ENCODE measurements at regions of chr20 and their contacts with region 1.

Region 1: DNA sequence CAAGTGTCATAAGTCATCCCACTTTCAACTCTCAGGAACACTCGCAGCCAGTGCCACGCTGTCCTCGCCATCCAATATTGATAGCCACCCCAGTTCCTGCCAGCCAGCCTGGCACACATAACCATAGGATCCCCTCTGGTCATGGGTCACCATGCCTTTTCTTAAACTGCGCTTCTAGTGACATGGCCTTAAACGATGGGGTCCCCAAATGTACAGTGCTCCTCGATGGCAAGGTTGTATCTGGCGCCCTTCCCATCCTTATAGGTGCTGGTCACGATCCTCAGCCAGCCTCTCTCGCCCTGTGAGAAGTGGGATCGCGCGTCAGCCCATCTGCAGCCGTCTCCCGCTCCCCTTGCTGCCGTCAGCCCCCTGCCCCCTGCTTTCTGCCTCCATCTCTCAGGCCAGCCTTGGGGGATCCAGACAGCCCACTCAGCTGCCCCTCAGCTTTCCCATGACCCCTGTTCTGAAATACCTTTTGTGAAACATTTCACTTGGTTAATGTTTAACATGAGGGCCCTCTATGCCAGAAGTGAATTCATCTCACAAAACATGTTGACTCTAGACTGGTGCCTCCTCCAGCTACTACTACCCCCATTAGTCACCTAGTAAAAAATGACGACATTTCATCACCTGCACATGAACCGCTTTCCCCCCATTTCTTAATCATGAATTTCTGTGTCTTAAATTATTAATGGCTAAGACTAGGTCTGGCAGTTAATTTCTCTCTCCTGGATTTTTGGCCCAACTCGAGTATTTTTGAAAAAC is 11.4 kb downstream of the CTSZ start:
- DNase-seq: no peak
- H3K4me3 ChIP-seq: no peak overlapping the region
- H3K27ac ChIP-seq: peak overlapping the region in 1 of 2 donors; percentile 2
- H3K4me1 ChIP-seq: no peaks in the 10 kb centered on the region
- H3K27me3 ChIP-seq: no peaks in the 10 kb centered on the region
- CTCF ChIP-seq: no peak

Region 2: GRCh38 chr20:59940174-59940971 is 944.7 kb after region 1 on chr20 and contains the starts of genes FAM217B and PPP1R3D:
- intact Hi-C with region 1: loop called (anchors 5 kb)
- DNase-seq: peak; percentile 95 to 99
- H3K4me3 ChIP-seq: peak within 1 kb of the TSS; percentile 79 to 88
- H3K27ac ChIP-seq: peak within 1 kb of the TSS; percentile 92 to 94
- H3K4me1 ChIP-seq: peaks cover 14 to 31% of the 10 kb centered on the region in 2 donors
- H3K27me3 ChIP-seq: no peaks in the 10 kb centered on the region
- CTCF ChIP-seq: peak in 1 of 3 experiments; percentile 3
- total RNA-seq, gene FAM217B: 2.6 TPM
- total RNA-seq, gene PPP1R3D: 3.2 TPM